MCF 10A (cell line): ENCODE measurements at regions of chr7 and their contacts with region 1.

Region 1: DNA sequence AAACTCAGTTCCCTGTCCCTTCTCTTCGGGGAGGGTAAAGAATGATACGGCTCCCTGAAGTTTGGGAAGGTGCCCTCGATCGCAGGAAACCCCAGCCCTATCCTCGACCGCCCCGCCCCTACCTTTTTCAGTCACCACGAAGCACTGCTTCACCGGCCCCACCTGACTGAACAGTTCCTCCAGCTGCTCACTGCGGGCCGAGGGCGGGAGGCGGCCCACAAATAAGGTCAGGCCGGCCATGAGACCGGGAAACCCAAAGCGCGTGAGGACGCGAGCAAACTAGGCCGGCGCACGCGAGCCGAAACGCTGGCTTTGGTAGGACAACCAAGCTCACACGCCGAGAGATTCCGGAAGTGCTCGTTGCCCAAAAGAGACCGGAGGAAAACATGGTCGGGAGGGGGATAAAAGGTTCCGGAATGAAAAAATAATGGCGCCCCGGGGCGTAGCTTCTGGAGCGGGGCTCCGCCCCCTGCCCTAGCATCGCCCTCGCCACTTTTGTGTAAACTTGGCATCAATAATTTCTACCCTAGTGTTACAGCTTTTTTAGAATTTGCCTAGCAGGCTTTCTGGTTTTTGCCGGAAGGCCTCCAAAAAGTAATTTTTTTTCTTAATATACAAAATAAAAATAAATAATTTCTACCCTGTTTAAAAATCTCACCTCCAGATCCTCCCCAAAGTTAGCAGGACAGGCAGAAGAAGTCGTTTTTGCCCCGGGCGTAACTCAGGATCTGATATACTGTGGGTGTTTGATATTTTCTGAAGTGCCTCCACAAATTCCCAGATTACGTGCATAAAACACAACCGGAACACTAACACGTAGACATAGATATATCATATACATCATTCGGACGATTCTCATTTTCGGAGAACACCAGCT is at the start of gene RBM28:
- DNase-seq: peak; percentile 95
- H3K4me3 Mint-ChIP-seq: peak within 1 kb of the TSS; percentile 94
- H3K27ac Mint-ChIP-seq: peak within 1 kb of the TSS; percentile 96
- H3K4me1 Mint-ChIP-seq: peaks cover 8% of the 10 kb centered on the region
- H3K27me3 Mint-ChIP-seq: peaks cover 7% of the 10 kb centered on the region
- CTCF ChIP-seq: no peak
- total RNA-seq, gene RBM28: 61.5 and 63.8 TPM in 2 replicates

Region 2: DNA sequence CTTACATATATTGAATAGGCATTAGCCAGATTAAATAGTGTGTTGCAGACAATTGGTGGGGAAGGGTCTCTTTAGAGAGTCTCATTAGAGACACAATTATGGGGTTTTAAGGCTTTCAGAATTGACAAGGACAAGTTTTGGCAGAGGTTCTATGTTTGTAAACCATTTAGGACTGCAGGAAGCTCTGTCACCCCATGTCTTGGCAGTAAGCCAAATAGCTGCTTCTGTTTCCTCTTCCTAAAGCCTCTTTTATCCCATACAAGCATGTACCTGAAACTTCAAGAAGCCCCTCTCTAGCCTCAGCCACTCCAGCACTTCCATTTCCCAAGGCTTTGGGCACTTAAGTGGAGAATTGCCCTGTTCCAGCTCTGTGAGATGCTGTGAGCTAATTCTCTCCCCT is 290.8 kb before region 1 on chr7:
- CTCF ChIA-PET with region 1: no interaction called
- POLR2A ChIA-PET with region 1: no interaction called
- intact Hi-C with region 1: no loop called
- DNase-seq: peak; percentile 33
- H3K4me3 Mint-ChIP-seq: no peak overlapping the region
- H3K27ac Mint-ChIP-seq: no peak overlapping the region
- H3K4me1 Mint-ChIP-seq: peaks cover 7% of the 10 kb centered on the region
- H3K27me3 Mint-ChIP-seq: no peaks in the 10 kb centered on the region
- CTCF ChIP-seq: no peak

Region 3: GRCh38 chr7:128358233-128358632 is 14.4 kb after region 1 on chr7:
- CTCF ChIA-PET with region 1: interaction called, 18 read pairs
- POLR2A ChIA-PET with region 1: interaction called, 6 read pairs
- intact Hi-C with region 1: no loop called
- DNase-seq: no peak
- H3K4me3 Mint-ChIP-seq: no peak overlapping the region
- H3K27ac Mint-ChIP-seq: no peak overlapping the region
- H3K4me1 Mint-ChIP-seq: peaks cover 6% of the 10 kb centered on the region
- H3K27me3 Mint-ChIP-seq: peaks cover 22% of the 10 kb centered on the region
- CTCF ChIP-seq: no peak

Region 4: GRCh38 chr7:128373606-128374005 is 29.8 kb after region 1 on chr7:
- CTCF ChIA-PET with region 1: interaction called, 21 read pairs
- POLR2A ChIA-PET with region 1: interaction called, 4 read pairs
- intact Hi-C with region 1: no loop called
- DNase-seq: no peak
- H3K4me3 Mint-ChIP-seq: no peak overlapping the region
- H3K27ac Mint-ChIP-seq: no peak overlapping the region
- H3K4me1 Mint-ChIP-seq: no peaks in the 10 kb centered on the region
- H3K27me3 Mint-ChIP-seq: no peaks in the 10 kb centered on the region
- CTCF ChIP-seq: no peak

Region 5: DNA sequence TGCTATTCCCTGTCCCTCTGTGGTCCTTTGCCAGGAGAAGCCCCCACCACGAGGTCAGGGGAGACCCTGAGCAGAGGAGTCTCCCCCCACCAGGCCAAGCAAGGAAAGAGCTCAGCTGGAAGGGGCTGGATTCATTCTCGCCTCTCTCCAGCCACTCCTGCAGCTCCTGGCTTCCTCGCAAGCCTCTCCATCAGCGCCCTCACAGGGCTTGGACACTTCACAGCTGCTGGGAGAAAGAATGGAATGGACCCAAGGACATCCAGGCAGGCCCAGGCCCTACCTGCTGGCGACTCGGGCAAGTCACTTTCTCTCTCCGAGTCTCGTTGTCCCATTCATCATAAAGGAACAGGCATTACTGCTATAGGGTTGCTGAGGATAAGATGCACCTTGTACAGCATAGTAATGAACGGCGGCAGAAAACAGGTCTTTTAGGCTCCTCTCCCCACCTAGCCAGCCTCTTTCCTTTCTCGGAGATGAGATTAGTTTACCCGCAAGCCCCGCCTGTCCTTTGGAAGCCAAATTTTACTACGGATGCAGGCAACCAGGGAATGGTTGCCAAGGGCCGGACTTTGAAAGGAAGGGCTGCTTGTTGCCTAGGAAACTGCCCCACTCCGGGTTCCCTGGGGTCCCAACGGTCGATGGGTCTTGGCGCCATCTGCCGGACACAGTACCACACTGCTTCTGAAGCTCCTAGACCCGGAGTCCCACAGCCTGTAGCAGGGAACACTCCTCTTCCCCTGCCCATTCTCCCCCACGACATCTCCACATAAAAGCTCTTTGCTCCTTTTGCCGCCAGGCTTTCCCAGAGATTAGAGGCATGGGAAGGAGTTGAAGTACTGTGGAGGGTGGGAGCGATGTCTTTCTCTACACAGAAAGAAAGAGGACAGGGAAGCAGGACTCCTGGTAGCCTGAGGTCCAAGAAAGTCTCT is 43.7 kb after region 1 on chr7:
- CTCF ChIA-PET with region 1: interaction called, 372 read pairs
- POLR2A ChIA-PET with region 1: interaction called, 18 read pairs
- intact Hi-C with region 1: loop called (anchors 1 kb)
- DNase-seq: peak; percentile 78
- H3K4me3 Mint-ChIP-seq: no peak overlapping the region
- H3K27ac Mint-ChIP-seq: no peak overlapping the region
- H3K4me1 Mint-ChIP-seq: peaks cover 11% of the 10 kb centered on the region
- H3K27me3 Mint-ChIP-seq: no peaks in the 10 kb centered on the region
- CTCF ChIP-seq: peak; percentile 89